Left cardiac atrium (tissue), 4 donors: ENCODE measurements at regions of chr1 and their contacts with region 1.

Region 1: GRCh38 chr1:52552505-52553361 is at the start of gene TUT4:
- DNase-seq: peak; percentile 78
- ATAC-seq: peak; percentile 87
- total RNA-seq, gene TUT4: 30.1 to 32.7 TPM

Region 2: DNA sequence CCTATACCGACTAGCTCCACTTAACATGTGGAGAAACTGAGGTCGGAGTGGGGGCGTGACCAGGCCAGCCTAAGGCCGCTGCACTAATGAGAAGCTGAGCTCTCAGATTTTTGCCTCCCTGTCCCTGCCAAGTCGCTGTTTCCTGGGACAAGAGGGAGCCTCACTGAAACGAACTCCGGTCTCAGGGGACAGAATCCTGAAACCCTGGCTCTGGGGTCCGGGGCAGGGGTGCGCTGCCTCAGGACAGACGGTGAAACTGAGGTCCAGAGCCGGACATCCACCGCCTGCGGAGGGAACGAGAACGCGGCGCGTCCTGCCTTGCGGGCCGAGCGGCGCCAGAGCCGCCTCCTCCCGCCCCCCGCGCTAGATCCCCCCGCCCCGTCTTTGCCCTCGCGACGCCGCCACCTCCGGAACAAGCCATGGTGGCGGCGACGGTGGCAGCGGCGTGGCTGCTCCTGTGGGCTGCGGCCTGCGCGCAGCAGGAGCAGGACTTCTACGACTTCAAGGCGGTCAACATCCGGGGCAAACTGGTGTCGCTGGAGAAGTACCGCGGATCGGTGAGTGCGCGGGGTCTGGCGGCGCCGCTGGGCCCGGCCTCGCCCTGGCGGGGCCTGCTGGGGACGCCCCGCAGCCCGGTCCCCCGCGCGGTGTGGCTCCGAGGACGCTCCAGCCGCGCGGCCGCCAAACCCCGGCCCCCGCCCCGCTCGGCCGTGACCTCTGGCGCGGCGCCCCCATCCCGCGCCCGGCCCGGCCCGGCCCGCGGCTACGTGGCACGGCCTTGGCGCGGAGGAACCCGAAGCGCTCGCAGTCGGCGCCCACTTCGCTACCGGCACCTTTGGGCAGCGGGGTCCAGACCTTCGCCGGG is 49.5 kb after region 1 on chr1 and contains the start of gene GPX7:
- intact Hi-C with region 1: loop called in 1 of 2 experiments (anchors 5 kb)
- DNase-seq: peak; percentile 53
- ATAC-seq: peak; percentile 78 to 84
- total RNA-seq, gene GPX7: 7.6 to 12.4 TPM

Region 3: DNA sequence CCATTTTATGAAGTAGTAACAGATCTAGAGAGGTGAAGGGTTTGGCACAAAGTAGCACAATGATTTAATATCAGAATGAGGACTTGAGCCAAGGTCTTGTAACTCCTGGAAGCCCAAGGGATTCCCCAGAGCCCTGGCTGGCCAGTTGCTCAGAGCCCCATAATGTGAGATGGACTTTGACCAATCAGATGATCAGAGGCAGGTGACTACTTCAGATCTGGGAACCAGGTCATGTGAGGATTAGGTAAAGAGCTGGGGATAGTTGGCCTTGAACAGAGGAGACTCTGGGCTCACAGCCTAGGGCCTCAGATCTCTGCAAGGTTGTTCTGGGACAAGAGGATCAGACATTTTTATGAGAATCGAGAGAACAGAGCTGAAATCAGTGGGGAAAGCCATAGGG is 99.2 kb after region 1 on chr1:
- intact Hi-C with region 1: no loop called
- DNase-seq: no peak
- ATAC-seq: no peak

Region 4: DNA sequence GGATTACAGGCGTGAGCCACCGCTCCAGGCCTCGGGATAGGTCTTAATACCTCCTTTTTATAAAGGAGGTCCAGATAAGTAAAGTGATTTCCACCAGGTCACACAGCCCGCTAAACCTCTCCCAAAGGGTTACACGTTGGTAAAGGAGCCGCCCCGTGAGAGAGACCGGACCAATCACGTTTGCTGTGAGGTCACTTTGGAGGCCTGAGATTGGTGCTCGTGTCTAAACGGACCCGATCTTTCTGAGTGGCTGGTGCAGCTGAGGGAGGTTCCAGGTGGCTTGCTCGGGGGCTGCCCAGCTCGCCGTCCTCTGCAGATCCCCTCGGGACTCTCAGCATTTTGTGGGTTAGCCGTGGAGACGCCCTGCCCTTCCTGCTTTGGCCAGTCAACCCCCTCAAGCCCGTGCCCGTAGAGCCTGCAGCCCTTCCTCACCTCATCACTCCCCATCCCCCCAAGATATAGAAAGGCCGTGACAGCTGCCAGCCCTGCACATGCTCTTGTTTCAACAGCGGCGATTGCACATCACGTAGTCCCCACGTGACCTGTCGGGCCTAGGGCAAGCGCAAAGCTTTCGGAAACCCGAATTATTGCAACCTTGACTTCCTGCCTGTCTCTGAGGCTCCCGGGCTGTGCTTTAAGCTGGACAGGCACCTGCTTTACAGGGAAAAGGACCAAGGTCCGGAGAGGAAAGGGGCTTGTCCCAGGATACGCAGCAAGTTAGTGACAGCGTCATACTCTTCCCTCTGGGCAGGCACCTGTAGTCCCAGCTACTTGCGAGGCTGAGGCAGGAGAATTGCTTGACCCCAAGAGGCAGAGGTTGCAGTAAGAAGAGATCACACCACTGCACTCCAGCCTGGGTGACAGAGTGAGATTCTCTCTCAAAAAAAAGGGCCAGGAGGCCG is 150.4 kb after region 1 on chr1:
- intact Hi-C with region 1: no loop called
- DNase-seq: peak; percentile 91
- ATAC-seq: peak; percentile 92 to 93